BJ (cell line): ENCODE measurements at regions of chr11 and their contacts with region 1.

Region 1: DNA sequence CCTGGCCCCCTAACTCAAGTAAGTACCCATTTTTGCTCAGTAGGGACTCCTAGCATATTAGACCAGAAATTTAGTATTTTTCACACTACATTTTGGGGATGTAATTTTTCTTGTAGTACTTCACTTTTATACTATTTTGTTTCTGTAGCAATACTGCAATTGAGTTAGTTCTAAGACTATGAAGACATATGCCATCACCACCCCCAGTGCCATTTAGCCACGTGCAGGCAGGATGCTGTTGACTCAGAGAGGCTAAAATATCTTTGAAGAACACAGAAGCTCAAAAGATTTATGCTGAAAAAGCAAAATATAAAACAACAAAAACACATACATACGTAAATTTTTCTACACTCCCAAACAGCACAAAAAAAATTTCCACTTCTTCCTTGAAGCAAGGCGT is 29.1 kb upstream of the DLAT start:
- DNase-seq: no peak
- H3K4me3 ChIP-seq: no peak overlapping the region
- H3K27me3 ChIP-seq: no peaks in the 10 kb centered on the region
- CTCF ChIP-seq: no peak

Region 2: GRCh38 chr11:111707039-111707690 is 289.0 kb before region 1 on chr11:
- CTCF ChIA-PET with region 1: no interaction called
- POLR2A ChIA-PET with region 1: no interaction called
- DNase-seq: peak; percentile 65
- H3K4me3 ChIP-seq: no peak overlapping the region
- H3K27me3 ChIP-seq: no peaks in the 10 kb centered on the region
- CTCF ChIP-seq: no peak

Region 3: GRCh38 chr11:111878849-111879636 is 117.1 kb before region 1 on chr11 and contains the starts of genes CFAP68 and FDXACB1:
- CTCF ChIA-PET with region 1: interaction called, 12 read pairs
- POLR2A ChIA-PET with region 1: no interaction called
- DNase-seq: peak; percentile 81
- H3K4me3 ChIP-seq: peak within 1 kb of the TSS; percentile 62
- H3K27me3 ChIP-seq: no peaks in the 10 kb centered on the region
- CTCF ChIP-seq: peak; percentile 99
- polyA plus RNA-seq, gene CFAP68: 16.6 and 33.0 TPM in 2 replicates
- polyA plus RNA-seq, gene FDXACB1: 0.81 and 1.2 TPM in 2 replicates

Region 4: GRCh38 chr11:111926505-111927391 is 69.4 kb before region 1 on chr11:
- CTCF ChIA-PET with region 1: interaction called, 29 read pairs
- POLR2A ChIA-PET with region 1: no interaction called
- DNase-seq: peak; percentile 86
- H3K4me3 ChIP-seq: peak overlapping the region; percentile 40
- H3K27me3 ChIP-seq: no peaks in the 10 kb centered on the region
- CTCF ChIP-seq: peak; percentile 7; the same call in 1 of the 2 replicates

Region 5: GRCh38 chr11:111938687-111939160 is 57.4 kb before region 1 on chr11:
- CTCF ChIA-PET with region 1: interaction called, 10 read pairs
- POLR2A ChIA-PET with region 1: no interaction called
- DNase-seq: no peak
- H3K4me3 ChIP-seq: no peak overlapping the region; the same call in 1 of the 2 replicates
- H3K27me3 ChIP-seq: no peaks in the 10 kb centered on the region
- CTCF ChIP-seq: no peak

Region 6: DNA sequence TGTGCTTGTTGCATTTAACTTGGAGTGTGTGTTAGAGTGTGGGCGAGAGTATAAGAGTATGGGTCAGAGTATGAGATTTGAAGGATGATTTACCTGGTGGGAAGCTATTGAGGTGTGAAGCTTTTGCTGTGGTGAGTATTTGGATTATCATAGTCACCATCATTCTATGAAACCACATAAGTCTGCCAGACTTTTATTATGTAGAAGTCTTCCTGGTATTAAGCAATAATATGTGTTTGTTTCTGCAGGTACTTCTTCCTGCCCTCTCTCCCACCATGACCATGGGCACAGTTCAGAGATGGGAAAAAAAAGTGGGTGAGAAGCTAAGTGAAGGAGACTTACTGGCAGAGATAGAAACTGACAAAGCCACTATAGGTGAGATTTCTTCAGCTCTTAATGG is 37.0 kb after region 1 on chr11:
- CTCF ChIA-PET with region 1: no interaction called
- POLR2A ChIA-PET with region 1: no interaction called
- DNase-seq: no peak
- H3K4me3 ChIP-seq: no peak overlapping the region
- H3K27me3 ChIP-seq: no peaks in the 10 kb centered on the region; the same call in 1 of the 2 replicates
- CTCF ChIP-seq: no peak